GM10248 (cell line): ENCODE measurements at regions of chr11 and their contacts with region 1.

Region 1: DNA sequence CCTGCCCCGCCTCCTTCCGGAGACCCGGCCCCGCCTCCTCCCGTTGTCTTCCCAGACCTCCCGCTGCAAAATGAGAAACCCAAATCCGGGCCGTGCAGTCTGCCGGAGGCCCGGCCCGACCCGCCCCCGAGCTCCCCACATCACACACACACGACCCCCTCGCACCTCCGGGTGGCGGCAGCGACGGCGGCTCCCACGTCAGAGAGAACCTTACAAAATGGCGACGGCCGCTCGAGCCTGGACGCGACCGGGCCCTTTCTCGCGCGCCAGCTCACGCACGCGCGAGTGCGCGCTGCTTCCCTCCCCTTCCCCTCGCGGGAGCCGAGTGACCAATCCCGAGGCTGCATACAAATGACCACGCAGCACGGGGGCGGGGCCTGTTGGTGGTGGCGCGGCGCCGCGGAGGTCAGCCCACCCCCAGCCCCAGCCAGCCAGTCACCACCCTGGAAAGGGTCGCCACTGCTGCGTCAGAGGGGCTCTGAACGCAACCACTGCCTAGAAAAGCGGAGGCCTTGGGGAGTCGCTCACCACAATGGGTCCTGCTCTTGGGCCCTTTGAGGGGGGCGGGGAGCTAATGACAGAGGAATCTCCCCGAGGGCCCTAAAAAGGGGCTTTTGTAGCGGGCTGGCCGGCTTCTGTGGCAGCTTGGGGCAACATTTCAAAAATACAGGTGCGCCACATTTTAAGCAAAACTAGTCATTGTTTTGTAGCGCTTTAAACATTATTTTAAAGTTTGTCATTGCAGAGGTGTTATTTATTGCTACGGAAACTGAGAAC is at the start of gene RBM4B:
- DNase-seq: peak; percentile 98
- CTCF ChIP-seq: no peak

Region 2: DNA sequence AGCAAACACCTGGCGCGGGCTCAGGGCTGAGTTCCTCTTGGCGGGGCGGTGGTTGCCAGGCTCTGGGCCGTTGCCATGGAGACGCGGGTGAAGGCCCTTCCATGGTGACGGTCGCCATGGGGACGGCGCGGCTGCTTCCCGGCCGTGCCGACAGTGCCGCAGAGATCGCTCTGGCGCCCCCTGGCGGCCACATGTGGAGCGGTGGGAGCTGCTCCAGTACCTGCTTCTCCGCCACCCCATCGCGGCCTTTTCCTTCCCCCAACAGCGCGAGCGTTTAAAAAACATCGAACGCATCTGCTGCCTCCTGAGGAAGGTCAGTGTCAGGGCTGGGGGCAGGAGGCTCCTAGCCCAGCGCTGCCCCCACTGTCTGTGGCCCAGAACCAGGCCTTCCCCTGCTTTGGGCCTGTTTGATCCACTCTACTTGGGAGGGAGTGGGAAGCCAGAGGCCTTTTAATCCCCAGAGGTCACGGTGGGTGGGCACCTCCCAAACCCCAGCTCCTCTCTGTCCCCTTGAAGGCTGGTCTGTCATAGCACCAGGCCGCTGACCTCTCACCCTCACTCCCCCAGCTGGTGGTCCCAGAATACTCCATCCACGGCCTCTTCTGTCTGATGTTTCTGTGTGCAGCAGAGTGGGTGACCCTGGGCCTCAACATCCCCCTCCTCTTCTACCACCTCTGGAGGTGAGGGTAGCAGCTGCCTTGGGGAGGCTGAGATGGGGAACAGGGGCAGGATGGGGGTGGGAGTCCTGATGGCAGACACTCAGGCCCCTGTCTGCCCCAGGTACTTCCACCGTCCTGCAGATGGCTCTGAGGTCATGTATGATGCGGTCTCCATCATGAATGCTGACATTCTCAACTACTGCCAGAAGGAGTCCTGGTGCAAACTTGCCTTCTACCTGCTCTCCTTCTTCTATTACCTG is 395.1 kb before region 1 on chr11:
- CTCF ChIA-PET with region 1: no interaction called
- POLR2A ChIA-PET with region 1: no interaction called
- DNase-seq: peak; percentile 99
- CTCF ChIP-seq: peak; percentile 98

Region 3: DNA sequence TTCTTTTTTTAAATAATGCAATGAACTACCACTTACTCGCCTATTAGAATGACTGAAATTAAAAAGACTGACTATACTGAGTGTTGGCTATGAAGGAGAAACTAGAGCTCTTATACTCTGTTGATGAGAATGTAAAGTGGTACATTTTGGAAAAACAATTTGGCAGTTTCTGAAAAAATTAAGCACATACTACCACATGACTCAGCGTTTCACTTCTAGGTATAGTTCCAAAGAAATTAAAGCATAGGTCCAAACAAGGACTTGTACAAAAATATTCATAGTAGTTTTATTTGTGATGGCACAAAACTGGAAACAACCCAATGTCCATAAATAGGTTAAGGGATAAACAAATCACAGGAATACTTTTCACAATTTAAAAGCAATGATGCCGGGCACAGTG is 283.8 kb before region 1 on chr11:
- CTCF ChIA-PET with region 1: interaction called, 13 read pairs
- POLR2A ChIA-PET with region 1: no interaction called
- DNase-seq: no peak
- CTCF ChIP-seq: no peak

Region 4: DNA sequence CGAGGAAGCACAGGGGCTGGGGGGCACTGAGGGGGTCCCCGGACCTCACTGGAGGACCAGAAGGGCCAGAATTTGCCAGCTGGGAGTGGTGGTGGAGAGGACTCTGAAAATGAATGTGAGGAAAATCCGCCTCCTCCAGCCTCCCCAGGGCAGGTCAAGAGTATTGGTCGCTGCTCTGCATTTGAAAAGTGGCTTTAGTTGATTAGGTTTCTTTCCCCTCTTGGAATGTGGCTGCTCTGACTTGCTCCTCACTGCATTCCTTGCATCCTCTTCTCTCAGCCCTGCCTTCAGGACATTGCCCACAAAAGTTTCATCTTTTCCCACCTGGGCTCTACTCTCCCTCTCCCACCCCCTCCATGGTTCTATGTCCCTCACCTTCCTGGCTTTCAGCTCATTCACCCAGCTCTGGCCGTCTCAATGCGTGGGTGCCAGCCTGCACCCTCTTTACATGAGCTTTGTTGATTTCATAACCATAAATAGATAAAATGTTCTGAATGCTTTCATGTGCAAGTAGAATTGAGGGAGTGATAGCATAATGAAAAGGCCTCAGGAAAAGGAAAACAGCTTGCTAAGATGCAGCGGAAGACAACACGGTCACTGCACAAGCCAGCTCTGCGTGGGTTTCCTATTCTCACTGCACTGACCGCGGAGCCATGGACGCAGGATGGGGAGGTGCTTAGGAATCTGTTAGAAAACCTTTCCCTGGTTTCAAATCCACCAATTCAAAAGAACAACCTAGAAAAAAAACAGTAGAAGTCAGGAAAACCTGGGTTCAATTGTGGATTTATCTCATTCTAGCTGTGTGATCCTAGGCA is 263.5 kb before region 1 on chr11:
- CTCF ChIA-PET with region 1: interaction called, 82 read pairs
- POLR2A ChIA-PET with region 1: interaction called, 3 read pairs
- DNase-seq: no peak
- CTCF ChIP-seq: no peak

Region 5: GRCh38 chr11:66438504-66439466 is 239.0 kb before region 1 on chr11 and contains the start of gene MRPL11:
- CTCF ChIA-PET with region 1: interaction called, 16 read pairs
- POLR2A ChIA-PET with region 1: no interaction called
- DNase-seq: peak; percentile 96
- CTCF ChIP-seq: peak; percentile 74

Region 6: DNA sequence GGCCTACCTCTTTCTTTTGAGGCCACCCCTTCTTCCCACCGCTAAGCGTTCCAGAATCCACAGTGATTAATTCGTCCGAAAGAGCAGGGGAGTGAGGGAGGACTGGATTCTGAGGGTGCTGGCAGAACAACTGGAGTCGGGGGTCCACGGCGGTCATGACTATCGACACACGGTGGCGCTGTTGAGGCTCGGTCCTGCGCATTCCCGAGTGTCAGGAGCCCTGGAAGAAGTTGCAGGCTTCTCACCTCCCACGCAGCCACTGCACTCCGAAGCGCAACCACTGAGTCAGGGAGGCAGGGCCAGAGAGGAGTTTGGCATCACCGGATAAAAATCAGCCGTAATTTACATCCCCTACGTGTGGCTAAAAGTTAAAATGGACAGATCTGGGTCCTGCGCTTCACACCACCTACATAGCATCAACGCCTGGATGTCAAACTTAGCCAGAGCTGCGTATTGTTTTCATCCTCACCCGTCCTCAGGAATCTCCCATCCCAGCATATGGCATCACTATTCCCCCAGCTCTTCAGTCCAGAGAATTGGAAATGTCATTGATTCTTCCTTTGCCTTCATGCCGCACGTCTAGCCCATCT is 98.7 kb before region 1 on chr11:
- CTCF ChIA-PET with region 1: interaction called, 103 read pairs
- POLR2A ChIA-PET with region 1: no interaction called
- DNase-seq: peak; percentile 83
- CTCF ChIP-seq: peak; percentile 74

Region 7: DNA sequence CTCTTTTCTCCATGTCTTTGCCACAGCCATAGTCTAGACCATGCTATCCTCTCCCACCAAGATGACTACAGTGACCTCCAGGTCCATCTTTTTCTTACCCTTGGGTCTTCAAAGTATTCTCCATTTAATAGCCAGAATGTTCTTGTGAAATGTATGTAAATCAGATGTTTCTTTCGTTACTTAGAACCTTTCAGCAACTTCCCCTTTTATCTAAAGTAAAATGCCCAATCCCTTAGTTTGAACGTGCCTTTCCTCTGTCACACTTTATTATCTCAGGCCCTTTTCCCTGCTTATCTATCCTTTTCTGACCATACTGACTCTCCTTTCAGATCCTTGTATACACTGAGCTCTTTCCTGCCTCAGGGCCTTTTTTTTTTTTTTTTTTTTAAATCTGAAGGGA is 18.0 kb before region 1 on chr11:
- CTCF ChIA-PET with region 1: interaction called, 27 read pairs
- POLR2A ChIA-PET with region 1: interaction called, 6 read pairs
- DNase-seq: no peak
- CTCF ChIP-seq: no peak

Region 8: GRCh38 chr11:66834501-66834845 is 156.7 kb after region 1 on chr11:
- CTCF ChIA-PET with region 1: interaction called, 11 read pairs
- POLR2A ChIA-PET with region 1: interaction called, 8 read pairs
- DNase-seq: no peak
- CTCF ChIP-seq: no peak